ENCODE measurements at regions of chr2 and their contacts with region 1.

Region 1: GRCh38 chr2:70248181-70248847 is at the start of gene TIA1:
- DNase-seq: peak; percentile 99
- H3K4me3 ChIP-seq: peak within 1 kb of the TSS; percentile 65 to 93 (median 77)
- H3K27ac ChIP-seq: peak within 1 kb of the TSS; percentile 93 to 97 (median 95)
- H3K4me1 ChIP-seq: peaks cover 0 to 39% (median 37%) of the 10 kb centered on the region in 4 donors
- H3K27me3 ChIP-seq: no peaks in the 10 kb centered on the region
- CTCF ChIP-seq: no peak
- EP300 ChIP-seq: no peak
- POLR2A ChIP-seq: peak; percentile 66 to 75
- total RNA-seq, gene TIA1: 94.8 to 132 (median 105) TPM

Region 2: DNA sequence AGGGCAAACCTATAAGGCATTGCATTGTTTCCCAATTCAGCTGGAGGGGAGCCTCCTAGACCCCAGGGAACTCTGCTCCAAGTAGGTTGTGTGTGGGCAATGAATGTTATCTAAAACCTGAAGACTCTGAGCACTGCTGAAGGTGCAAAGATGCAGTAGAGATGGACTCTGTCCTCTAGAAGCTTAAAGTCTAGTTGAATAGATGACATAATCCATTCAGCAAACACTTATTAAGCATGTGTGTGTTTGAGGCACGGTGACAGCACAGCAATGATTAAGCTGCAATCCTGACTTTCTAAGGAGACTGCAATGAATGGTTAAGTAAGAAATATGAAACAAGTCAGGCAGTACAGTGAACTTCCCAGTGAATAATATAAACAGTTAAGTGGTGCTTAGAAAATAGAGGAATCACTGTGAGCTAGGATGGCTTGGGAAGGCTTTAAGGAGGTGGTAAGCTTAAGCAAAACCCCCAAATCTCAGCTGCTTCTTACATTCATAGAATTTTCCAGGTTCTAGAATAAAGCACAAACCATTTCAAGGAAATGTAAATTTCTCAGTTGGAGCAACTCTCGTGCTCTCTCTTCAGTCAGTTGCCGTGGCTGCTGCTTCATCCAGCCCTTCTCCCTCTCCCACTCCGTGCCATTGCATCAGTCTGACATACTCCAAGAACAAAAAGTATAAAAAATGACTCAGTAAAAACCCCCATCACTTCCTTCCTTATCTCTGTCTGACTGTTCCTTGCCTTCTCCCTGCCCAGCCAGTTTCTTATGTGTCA is 314.3 kb before region 1 on chr2:
- intact Hi-C with region 1: no loop called
- DNase-seq: no peak
- H3K4me3 ChIP-seq: no peak overlapping the region
- H3K27ac ChIP-seq: peak overlapping the region in 2 of 4 donors; percentile 4 to 22
- H3K4me1 ChIP-seq: no peaks in the 10 kb centered on the region
- H3K27me3 ChIP-seq: no peaks in the 10 kb centered on the region
- CTCF ChIP-seq: no peak
- EP300 ChIP-seq: no peak
- POLR2A ChIP-seq: no peak

Region 3: GRCh38 chr2:70190418-70191243 is 57.7 kb before region 1 on chr2 and contains the start of gene C2orf42:
- intact Hi-C with region 1: loop called (anchors 2 kb)
- DNase-seq: peak; percentile 98
- H3K4me3 ChIP-seq: peak within 1 kb of the TSS; percentile 77 to 91 (median 81)
- H3K27ac ChIP-seq: peak within 1 kb of the TSS; percentile 95 to 98 (median 96)
- H3K4me1 ChIP-seq: peaks cover 0 to 11% (median 5%) of the 10 kb centered on the region in 4 donors
- H3K27me3 ChIP-seq: no peaks in the 10 kb centered on the region
- CTCF ChIP-seq: no peak
- EP300 ChIP-seq: peak in 1 of 4 donors; percentile 18
- POLR2A ChIP-seq: peak; percentile 98 to 99
- total RNA-seq, gene C2orf42: 8.8 to 24.3 (median 21.8) TPM

Region 4: DNA sequence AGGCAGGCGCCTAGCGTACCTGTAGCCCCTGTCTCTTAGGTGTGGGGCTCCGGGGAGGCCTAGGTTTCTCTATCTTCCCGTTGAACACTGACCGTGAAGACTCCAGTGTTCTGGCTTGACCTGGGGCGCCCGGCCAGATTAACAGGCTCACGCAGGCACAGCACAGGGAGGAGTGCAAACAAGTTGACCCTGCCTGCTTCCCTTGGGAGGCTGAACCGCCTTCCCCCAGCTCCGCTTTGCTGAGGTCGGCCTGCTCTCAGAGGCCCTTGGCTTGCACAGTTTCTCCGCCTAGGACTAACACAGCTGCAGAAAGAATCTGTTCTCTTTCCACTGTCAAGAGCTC is 10.2 kb after region 1 on chr2:
- intact Hi-C with region 1: loop called (anchors 1 kb)
- DNase-seq: peak; percentile 90
- H3K4me3 ChIP-seq: peak overlapping the region; percentile 70 to 92 (median 76)
- H3K27ac ChIP-seq: peak overlapping the region; percentile 88 to 95 (median 91)
- H3K4me1 ChIP-seq: peaks cover 0 to 40% (median 34%) of the 10 kb centered on the region in 4 donors
- H3K27me3 ChIP-seq: no peaks in the 10 kb centered on the region
- CTCF ChIP-seq: no peak
- EP300 ChIP-seq: no peak
- POLR2A ChIP-seq: no peak

Region 5: DNA sequence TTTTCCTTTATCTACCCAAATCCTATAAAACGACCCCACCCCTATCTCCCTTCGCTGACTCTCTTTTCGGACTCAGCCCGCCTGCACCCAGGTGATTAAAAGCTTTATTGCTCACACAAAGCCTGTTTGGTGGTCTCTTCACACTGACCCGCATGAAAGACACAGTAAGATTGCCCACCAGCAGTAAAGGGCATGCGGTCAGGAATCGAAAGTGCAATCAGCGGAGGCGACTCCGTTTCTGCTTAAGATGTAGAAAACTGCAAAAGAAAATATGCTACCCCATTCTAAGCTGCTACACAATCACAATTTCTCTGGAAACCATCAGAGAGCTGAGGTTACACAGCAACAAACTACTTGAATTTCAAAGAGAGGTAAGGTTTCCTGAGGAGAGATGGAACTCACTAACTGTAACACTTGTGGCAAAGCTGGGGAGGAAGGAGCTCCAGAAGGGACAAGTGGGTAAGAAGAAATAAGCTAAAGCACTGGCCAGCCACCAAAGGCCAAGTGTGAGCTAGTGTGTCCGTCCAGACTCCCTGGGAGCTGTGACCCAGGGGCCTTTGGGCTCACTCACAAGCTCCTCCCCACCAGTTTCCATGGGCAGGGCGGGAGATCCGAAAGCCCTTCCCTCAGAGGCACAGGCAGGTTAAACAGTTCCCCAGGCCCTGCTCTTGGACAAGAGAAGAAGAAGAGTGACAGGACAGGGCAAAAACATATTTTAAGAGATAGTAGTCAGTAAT is 378.1 kb after region 1 on chr2:
- intact Hi-C with region 1: no loop called
- DNase-seq: no peak
- H3K4me3 ChIP-seq: no peak overlapping the region
- H3K27ac ChIP-seq: no peak overlapping the region
- H3K4me1 ChIP-seq: peaks cover 0 to 4% (median 0%) of the 10 kb centered on the region in 4 donors
- H3K27me3 ChIP-seq: no peaks in the 10 kb centered on the region
- CTCF ChIP-seq: no peak
- EP300 ChIP-seq: no peak
- POLR2A ChIP-seq: no peak

Measured in sigmoid colon (tissue), 7 donors.